BJ (cell line): ENCODE measurements at regions of chr11 and their contacts with region 1.

Region 1: DNA sequence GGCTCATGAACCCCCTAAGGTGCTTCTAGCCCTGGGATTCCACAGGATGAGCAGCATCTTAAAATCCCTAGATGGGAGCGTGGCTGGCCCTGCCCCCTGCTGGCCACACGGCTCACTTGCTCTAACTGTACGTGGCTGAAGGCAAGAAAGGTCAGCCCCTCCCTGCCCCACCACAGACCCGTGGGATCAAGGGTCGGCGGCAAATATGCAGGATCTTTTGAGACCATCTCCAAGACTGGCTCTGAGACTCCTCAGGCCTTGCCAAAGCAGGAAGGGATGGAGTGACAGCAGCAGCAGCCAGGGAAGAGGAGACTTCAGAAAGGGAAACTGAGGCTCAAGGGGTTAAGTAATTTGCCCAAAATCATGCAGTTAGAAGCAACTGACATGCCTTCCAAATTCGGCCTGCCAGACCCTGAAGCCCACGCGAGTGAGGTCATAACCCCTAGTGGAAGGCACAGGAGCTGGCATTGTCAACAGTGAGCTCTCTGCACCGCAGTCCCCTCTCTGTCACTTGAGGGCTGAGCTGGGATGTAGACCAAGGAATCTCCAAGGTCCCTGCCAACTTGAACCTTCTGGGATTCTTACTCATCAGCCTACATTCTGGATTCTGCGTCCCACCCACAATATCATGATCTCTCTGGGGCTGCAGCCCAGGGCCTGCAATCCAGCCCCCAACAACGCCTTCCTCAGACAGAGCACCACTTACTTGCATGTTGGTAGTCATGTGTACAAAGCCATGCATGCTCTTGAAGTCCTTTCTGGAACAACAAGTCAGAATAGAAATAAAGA is 31.4 kb downstream of the CREB3L1 start:
- DNase-seq: no peak
- H3K4me3 ChIP-seq: no peak overlapping the region
- H3K27me3 ChIP-seq: no peaks in the 10 kb centered on the region
- CTCF ChIP-seq: peak; percentile 91

Region 2: GRCh38 chr11:46247664-46248063 is 61.2 kb before region 1 on chr11:
- CTCF ChIA-PET with region 1: interaction called, 341 read pairs
- POLR2A ChIA-PET with region 1: interaction called, 3 read pairs
- DNase-seq: no peak
- H3K4me3 ChIP-seq: no peak overlapping the region
- H3K27me3 ChIP-seq: no peaks in the 10 kb centered on the region
- CTCF ChIP-seq: no peak

Region 3: DNA sequence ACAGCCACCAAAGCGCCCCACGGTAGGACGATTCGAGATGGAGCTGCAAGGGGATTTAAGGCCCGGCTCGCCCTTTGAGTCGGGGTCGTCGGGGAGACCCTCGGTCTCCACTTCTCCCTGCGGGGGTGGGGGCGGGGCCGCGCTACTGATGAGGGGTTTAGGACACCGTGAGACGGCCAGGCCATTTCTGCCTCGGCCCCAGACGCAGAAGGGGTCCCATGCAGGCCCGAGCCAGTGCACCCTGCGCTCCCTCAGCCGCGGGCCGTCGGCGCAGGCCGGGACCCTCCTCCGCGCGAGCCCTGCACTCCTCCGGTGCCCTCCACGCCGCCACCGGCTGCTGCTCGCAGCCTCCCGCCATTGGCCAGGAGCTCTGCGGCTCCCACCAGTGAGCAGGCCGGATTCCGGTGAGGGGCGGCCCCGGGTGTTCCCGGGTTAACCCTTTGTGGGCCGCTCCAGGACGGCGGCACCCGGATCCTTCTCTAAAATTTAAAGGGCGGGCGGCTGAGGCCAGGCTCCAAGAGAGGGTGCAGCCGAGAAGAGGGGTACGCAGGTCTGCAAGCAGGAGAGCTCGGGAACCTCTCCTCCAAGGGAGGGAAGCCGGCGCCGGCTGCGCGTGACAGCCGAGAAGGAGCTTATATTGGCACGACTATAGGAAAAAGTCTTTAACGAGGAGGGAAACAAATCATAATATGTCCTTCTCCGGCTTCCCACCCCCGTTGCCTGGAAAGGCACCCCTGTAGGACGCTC is 13.3 kb before region 1 on chr11:
- CTCF ChIA-PET with region 1: interaction called, 90 read pairs
- POLR2A ChIA-PET with region 1: no interaction called
- DNase-seq: no peak
- H3K4me3 ChIP-seq: peak overlapping the region; percentile 51
- H3K27me3 ChIP-seq: no peaks in the 10 kb centered on the region
- CTCF ChIP-seq: no peak